Prostate gland (tissue), 2 donors: ENCODE measurements at regions of chr7 and their contacts with region 1.

Region 1: GRCh38 chr7:41940760-41941343 is 238.0 kb upstream of the INHBA start:
- DNase-seq: peak; percentile 72
- H3K4me3 ChIP-seq: no peak overlapping the region
- H3K27ac ChIP-seq: no peak overlapping the region
- H3K4me1 ChIP-seq: no peaks in the 10 kb centered on the region
- H3K27me3 ChIP-seq: no peaks in the 10 kb centered on the region
- CTCF ChIP-seq: peak; percentile 56 to 90 (median 84)
- POLR2A ChIP-seq: no peak

Region 2: DNA sequence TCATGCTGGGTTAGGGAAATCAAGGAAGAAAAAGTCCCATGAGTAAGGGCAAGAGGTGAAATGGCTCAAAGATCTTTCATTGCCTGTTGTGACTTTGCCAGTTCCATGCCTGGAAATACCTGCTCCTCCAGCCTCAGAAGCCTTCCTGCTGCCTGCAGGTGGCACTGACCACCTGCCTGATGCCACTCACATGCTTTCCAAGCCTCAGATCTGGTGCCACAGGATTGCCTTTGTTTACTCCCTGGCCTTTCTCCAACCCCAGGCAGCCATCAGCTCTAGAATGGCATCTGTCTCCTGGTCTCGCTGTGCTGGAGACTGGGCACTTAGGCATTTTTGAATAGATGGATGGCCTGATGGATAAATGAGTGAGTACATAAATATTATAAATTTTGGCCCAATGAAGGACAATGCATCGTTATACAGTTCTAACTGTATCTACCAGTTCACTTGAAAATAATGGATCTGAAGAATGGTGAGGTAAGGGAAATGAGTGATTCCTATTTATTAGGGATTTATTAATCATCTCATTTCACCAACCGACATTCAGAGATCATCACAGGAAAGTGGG is 895.2 kb before region 1 on chr7:
- intact Hi-C with region 1: no loop called
- DNase-seq: peak; percentile 77
- H3K4me3 ChIP-seq: no peak overlapping the region
- H3K27ac ChIP-seq: no peak overlapping the region
- H3K4me1 ChIP-seq: no peaks in the 10 kb centered on the region
- H3K27me3 ChIP-seq: no peaks in the 10 kb centered on the region
- CTCF ChIP-seq: peak in 3 of 4 experiments; percentile 74 to 78 (median 76)
- POLR2A ChIP-seq: no peak

Region 3: GRCh38 chr7:42493436-42494238 is 552.8 kb after region 1 on chr7:
- intact Hi-C with region 1: loop called (anchors 10 kb)
- DNase-seq: peak; percentile 69
- H3K4me3 ChIP-seq: peak overlapping the region; percentile 22 to 32
- H3K27ac ChIP-seq: peak overlapping the region in 1 of 2 donors; percentile 35
- H3K4me1 ChIP-seq: no peaks in the 10 kb centered on the region
- H3K27me3 ChIP-seq: peaks cover 2% of the 10 kb centered on the region
- CTCF ChIP-seq: peak in 1 of 4 experiments; percentile 4
- POLR2A ChIP-seq: no peak

Region 4: GRCh38 chr7:42690794-42691639 is 750.2 kb after region 1 on chr7:
- intact Hi-C with region 1: loop called (anchors 2 kb)
- DNase-seq: peak; percentile 21
- H3K4me3 ChIP-seq: no peak overlapping the region
- H3K27ac ChIP-seq: no peak overlapping the region
- H3K4me1 ChIP-seq: no peaks in the 10 kb centered on the region
- H3K27me3 ChIP-seq: no peaks in the 10 kb centered on the region
- CTCF ChIP-seq: peak in 3 of 4 experiments; percentile 32 to 62 (median 55)
- POLR2A ChIP-seq: no peak

Region 5: GRCh38 chr7:42843205-42843800 is 902.5 kb after region 1 on chr7:
- intact Hi-C with region 1: loop called (anchors 5 kb)
- DNase-seq: peak; percentile 26
- H3K4me3 ChIP-seq: no peak overlapping the region
- H3K27ac ChIP-seq: no peak overlapping the region
- H3K4me1 ChIP-seq: no peaks in the 10 kb centered on the region
- H3K27me3 ChIP-seq: no peaks in the 10 kb centered on the region
- CTCF ChIP-seq: peak in 3 of 4 experiments; percentile 15 to 57 (median 55)
- POLR2A ChIP-seq: no peak